CD8-positive, alpha-beta memory T cell (primary cell): ENCODE measurements at regions of chr16 and their contacts with region 1.

Region 1: DNA sequence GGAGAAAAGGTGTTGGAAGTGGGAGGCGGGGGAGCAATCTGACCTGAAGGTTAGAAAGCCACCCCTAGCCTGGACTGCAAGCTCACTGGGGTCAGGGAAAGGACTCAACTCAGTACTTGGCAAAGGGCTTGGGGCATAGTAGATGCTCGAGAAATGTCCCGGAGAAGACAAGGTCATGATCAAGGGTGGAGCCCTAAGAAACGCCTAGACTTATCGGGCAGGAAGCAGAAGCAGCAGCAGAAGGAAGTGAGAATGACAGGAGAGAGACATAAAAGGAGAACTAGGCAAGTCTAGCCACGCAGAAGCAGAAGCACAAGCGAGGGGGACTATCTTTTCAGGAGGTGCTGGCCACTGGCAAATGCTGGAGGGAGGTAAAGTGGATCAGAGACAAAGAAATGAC is 10.2 kb downstream of the COTL1 start:
- DNase-seq: peak in 2 of 5 donors; percentile 48 to 54
- H3K4me3 ChIP-seq: peak overlapping the region; percentile 49
- H3K4me3 Mint-ChIP-seq: peak overlapping the region; percentile 59 to 88 (median 80)
- H3K27ac ChIP-seq: peak overlapping the region; percentile 36
- H3K27ac Mint-ChIP-seq: peak overlapping the region; percentile 86 to 97 (median 94)
- H3K4me1 ChIP-seq: peaks cover 96% of the 10 kb centered on the region
- H3K4me1 Mint-ChIP-seq: peaks cover 87 to 95% (median 95%) of the 10 kb centered on the region in 3 donors
- H3K27me3 ChIP-seq: no peaks in the 10 kb centered on the region
- H3K27me3 Mint-ChIP-seq: peaks cover 0 to 2% of the 10 kb centered on the region in 2 donors

Region 2: DNA sequence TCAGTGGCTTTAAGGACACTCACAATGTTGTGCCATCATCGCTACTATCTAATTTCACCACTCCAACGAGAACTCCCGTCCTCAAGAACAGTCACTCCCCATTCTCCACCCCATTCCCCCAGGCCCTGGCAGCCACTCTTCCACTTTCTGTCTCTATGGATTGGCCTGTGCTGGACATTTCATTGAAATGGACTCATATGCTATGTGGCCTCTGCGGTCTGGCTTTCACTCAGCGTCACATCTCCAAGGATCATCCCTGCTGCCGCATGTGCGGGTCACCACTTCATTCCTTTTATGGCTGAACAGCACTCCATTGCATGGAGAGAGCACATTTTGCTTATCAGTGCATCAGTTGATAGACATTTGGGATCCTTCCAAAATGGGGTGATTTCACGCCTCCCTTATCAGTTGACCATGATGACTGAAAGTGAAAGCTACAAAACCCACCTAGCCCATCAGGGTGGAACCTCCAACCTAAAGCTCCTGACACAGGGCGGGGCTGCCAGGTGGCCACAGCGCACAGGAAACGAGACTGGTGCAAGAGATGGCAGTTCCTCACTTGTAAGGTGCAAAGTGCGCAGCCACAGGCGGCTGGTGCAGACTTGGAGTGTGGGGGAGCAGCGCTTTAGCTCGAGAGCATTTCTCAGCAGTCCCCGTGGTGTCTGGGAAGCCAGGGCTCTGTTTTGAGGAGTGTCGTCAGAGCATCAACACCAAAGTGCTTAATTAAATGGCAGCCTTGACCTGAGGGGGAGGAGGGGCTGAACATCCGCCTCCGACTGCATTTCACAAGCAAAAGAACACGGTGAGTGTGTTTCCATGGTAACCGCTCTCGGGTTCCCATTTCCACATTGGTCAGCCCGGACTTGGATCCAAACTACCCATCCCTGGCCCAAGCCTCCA is 13.6 kb before region 1 on chr16:
- CTCF ChIA-PET with region 1: interaction called, 42 read pairs
- POLR2A ChIA-PET with region 1: interaction called, 82 read pairs
- DNase-seq: peak; percentile 76 to 97 (median 83)
- H3K4me3 ChIP-seq: peak overlapping the region; percentile 53
- H3K4me3 Mint-ChIP-seq: peak overlapping the region; percentile 72 to 96 (median 88)
- H3K27ac ChIP-seq: peak overlapping the region; percentile 90
- H3K27ac Mint-ChIP-seq: peak overlapping the region; percentile 95 to 100 (median 99)
- H3K4me1 ChIP-seq: peaks cover 52% of the 10 kb centered on the region
- H3K4me1 Mint-ChIP-seq: peaks cover 64 to 85% (median 72%) of the 10 kb centered on the region in 3 donors
- H3K27me3 ChIP-seq: no peaks in the 10 kb centered on the region
- H3K27me3 Mint-ChIP-seq: peaks cover 0 to 3% of the 10 kb centered on the region in 2 donors